Heart left ventricle (tissue), 16 donors: ENCODE measurements at regions of chr10 and their contacts with region 1.

Region 1: DNA sequence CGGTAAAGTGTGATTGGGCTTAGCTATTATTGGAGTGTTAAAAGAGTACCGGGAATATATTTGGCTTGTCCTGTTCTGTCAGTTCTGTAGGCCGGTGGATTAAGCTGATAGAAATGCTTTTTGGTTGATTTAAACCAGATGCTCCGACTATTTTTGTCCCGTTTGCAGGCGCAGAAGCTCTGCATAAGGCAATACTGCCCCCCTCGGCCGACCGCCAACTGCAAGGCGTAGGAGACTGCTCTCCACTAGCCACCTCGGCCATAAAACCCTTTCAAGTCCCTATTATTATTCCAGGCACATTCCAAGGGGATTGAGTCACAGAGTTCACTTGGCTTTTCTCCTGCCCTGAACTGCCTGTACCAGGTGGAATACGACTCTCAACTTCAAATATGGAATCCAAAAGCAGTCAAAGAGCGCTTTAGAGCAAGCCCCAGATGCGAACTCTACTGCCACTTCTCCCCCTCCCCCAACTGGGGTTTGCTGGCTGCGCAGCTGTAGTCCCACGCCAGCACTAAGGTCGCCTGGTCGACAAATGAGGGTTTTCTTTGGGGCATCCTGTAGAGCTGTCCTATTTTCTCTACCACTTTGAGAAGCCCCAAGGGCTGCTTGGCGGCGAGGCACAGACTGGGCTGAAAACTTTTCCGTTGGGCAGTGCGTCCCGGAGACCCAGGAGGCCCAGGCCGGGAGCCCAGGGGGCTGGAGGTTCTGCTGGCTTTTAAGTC is 108.3 kb downstream of the REEP3 start:
- DNase-seq: peak; percentile 96 to 98 (median 97)
- ATAC-seq: peak; percentile 78 to 87 (median 80)
- H3K4me3 ChIP-seq: peak overlapping the region; percentile 14 to 71 (median 60)
- H3K27ac ChIP-seq: peak overlapping the region; percentile 93 to 99 (median 98)
- H3K4me1 ChIP-seq: peaks cover 9 to 41% (median 29%) of the 10 kb centered on the region in 12 donors
- H3K27me3 ChIP-seq: no peaks in the 10 kb centered on the region
- CTCF ChIP-seq: peak; percentile 64 to 90 (median 78)
- POLR2A ChIP-seq: no peak

Region 2: GRCh38 chr10:63166742-63167258 is 462.7 kb before region 1 on chr10:
- intact Hi-C with region 1: loop called in 9 of 10 experiments (anchors 2 to 10 kb)
- DNase-seq: peak in 1 of 5 donors; percentile 32
- ATAC-seq: peak; percentile 47 to 72 (median 68)
- H3K4me3 ChIP-seq: no peak overlapping the region
- H3K27ac ChIP-seq: peak overlapping the region in 1 of 12 donors; percentile 0
- H3K4me1 ChIP-seq: peaks cover 0 to 37% (median 17%) of the 10 kb centered on the region in 12 donors
- H3K27me3 ChIP-seq: no peaks in the 10 kb centered on the region
- CTCF ChIP-seq: peak; percentile 64 to 92 (median 82)
- POLR2A ChIP-seq: no peak

Region 3: DNA sequence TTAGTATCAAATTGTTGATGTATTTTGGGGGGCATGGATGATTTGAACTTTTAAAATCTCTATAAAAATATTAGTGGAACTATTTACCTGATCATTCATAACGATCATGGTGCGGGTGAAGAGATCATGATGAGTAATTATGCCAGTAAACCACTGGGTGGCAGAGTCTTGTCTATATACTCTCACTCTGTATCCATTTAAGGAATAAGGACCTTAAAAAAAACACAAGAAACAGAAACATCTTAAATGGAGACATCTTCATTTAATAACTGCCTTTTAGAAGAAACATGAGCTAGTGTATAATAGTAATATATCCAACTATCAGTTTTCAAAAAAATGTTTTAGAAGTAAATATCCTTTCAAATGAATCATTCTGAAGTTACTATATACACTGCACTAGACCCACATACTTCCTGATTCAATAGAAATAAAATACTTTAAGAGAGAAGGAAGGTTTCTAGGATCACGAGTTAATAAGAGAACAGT is 412.4 kb before region 1 on chr10:
- intact Hi-C with region 1: loop called in 6 of 10 experiments (anchors 2 to 5 kb)
- DNase-seq: no peak
- ATAC-seq: peak in 3 of 4 donors; percentile 75 to 84 (median 79)
- H3K4me3 ChIP-seq: no peak overlapping the region
- H3K27ac ChIP-seq: peak overlapping the region in 3 of 12 donors; percentile 7 to 24 (median 8)
- H3K4me1 ChIP-seq: peaks cover 0 to 63% (median 25%) of the 10 kb centered on the region in 12 donors
- H3K27me3 ChIP-seq: no peaks in the 10 kb centered on the region
- CTCF ChIP-seq: peak; percentile 55 to 80 (median 74)
- POLR2A ChIP-seq: no peak

Region 4: DNA sequence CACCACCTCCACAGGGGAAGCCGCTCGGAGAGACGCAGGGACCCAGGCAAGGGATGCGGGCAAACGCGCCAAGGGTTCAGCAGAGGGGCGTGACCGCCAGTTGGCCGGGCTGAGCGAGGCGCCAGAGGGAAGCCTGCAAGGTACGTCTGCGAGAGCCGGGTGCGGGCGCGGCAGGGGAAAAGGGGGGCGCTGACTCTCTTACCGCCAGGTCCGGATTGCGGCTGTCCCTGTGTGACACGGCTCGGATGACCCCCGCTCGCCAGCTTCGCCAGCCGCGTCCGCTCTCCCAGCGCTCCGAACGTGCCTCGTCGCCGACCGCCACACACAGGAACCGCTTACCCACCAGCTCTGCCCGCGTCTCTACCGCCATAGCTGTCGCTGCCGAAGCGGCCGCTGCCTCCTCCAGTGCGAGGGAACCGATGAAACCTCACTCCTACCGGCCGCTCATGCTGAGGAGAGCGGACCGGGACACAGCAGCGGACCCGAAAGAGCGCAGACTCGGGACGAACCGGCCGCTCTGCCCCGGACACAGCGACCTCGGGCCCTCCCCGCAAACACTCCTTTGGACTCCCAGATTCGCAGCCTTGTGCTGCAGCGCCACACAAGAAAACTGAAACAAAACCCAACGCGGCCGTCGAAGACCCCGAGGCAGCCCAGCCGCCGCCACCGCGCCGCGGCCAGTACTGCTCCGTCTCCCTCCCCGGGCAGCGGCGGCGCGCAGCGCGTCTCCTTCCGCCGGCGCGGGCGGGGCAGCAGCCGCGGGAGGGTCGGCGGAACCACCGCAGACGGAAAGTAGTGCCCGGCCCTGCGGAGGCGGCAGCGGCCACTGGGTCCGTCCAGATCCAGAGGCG is 164.0 kb before region 1 on chr10 and contains the start of gene JMJD1C:
- intact Hi-C with region 1: loop called in 8 of 10 experiments (anchors 1 to 10 kb)
- DNase-seq: peak; percentile 84 to 91 (median 86)
- ATAC-seq: peak; percentile 69 to 94 (median 90)
- H3K4me3 ChIP-seq: peak within 1 kb of the TSS; percentile 65 to 93 (median 86)
- H3K27ac ChIP-seq: peak within 1 kb of the TSS; percentile 87 to 96 (median 92)
- H3K4me1 ChIP-seq: peaks cover 0 to 40% (median 18%) of the 10 kb centered on the region in 12 donors
- H3K27me3 ChIP-seq: no peaks in the 10 kb centered on the region
- CTCF ChIP-seq: peak in 2 of 12 donors; percentile 7 to 40
- POLR2A ChIP-seq: peak in 1 of 2 donors; percentile 60
- total RNA-seq, gene JMJD1C: 27.0 to 54.6 (median 42.7) TPM

Region 5: GRCh38 chr10:63573068-63573697 is 56.3 kb before region 1 on chr10:
- intact Hi-C with region 1: loop called in 1 of 10 experiments (anchors 5 kb)
- DNase-seq: no peak
- ATAC-seq: peak; percentile 20 to 67 (median 56)
- H3K4me3 ChIP-seq: peak overlapping the region in 1 of 12 donors; percentile 2
- H3K27ac ChIP-seq: peak overlapping the region; percentile 14 to 78 (median 56)
- H3K4me1 ChIP-seq: peaks cover 0 to 51% (median 41%) of the 10 kb centered on the region in 12 donors
- H3K27me3 ChIP-seq: no peaks in the 10 kb centered on the region
- CTCF ChIP-seq: no peak
- POLR2A ChIP-seq: no peak

Region 6: DNA sequence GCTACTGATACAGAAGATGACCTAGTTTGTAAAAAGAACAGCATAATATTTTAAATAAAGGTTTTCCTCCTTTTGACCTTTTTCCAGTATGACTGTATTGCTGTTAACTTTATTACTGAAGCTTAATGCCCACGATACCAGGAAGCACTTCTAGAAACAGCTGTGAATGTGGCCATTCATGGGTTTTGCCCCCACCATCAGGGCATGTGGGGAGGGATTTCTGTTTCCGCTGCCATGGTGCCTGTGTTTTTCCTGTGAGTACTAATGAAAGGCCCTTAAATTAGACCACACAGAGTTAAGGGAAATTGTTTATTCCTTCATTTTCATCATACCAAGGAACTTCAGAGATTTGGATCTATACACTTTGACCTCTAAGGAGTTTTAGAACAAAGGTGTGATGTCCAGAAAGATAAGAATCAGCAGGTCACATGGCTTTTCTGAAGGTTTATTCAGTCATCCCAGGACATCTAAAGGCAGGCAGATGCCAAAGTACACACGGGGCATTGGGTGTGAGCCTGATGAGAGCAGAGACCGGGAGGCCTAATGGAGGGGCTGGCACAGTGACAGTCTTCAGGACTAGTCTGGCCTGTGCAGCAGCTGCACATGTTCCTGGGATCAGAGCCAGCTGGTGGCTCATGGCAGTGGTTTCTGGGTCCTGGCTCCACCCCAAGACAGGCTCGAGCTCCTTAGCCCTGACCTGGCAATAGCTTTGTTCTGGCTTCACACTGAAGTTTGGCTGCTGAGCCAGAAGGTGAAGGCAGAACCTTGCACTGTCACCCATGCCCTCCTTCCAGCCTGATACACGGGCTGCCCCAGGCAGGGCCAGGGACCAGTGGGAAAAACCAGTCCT is 82.6 kb after region 1 on chr10:
- intact Hi-C with region 1: loop called (anchors 1 to 5 kb)
- DNase-seq: peak; percentile 93 to 98 (median 94)
- ATAC-seq: peak; percentile 93 to 95 (median 94)
- H3K4me3 ChIP-seq: no peak overlapping the region
- H3K27ac ChIP-seq: peak overlapping the region; percentile 79 to 86 (median 83)
- H3K4me1 ChIP-seq: peaks cover 15 to 66% (median 43%) of the 10 kb centered on the region in 12 donors
- H3K27me3 ChIP-seq: no peaks in the 10 kb centered on the region
- CTCF ChIP-seq: no peak
- POLR2A ChIP-seq: no peak